ENCODE measurements at regions of chr1 and their contacts with region 1.

Region 1: GRCh38 chr1:24910751-24911650 is 19.1 kb downstream of the RUNX3 start:
- DNase-seq: no peak

Region 2: GRCh38 chr1:24355466-24355865 is 555.5 kb before region 1 on chr1:
- intact Hi-C with region 1: loop called in 1 of 2 experiments (anchors 5 kb)
- DNase-seq: no peak

Region 3: GRCh38 chr1:24861821-24862727 is 48.9 kb before region 1 on chr1:
- intact Hi-C with region 1: loop called in 1 of 2 experiments (anchors 2 kb)
- DNase-seq: peak; percentile 59

Region 4: DNA sequence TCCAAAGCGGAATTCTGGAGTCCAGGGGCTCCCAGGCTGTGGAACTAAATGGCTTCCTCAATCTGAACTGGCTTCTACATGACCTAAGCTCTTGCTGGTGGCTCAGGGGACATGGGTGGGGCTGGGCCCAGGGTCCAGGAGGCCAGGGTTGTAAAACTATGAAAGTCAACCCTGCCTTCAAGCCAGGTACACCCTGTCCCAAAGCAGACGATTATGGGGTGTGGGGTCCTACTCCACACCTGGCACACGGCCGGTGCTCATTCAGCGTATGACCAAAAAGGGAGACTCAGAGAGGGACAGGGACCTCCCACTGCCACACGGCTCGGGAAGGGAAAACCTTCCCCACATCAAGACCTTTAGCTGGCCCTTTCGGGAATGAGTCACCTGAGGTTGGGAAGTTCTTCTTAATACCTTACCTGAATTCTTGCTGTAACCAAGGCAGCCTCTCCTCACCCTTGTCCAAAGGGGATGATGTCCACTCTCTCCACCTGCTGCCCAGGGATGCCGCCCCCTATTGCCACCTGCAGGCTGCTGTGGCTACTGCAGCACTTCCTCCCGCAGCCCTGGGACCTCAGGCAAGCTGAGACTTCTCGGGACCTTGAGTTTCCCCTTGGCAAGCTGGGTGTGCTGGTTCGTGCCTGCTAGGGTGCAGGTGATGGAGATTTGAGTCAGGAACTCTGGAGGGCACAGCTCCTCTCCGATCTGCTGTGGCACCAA is 13.1 kb before region 1 on chr1:
- intact Hi-C with region 1: no loop called
- DNase-seq: peak; percentile 88

Region 5: GRCh38 chr1:24964811-24965570 is 54.0 kb after region 1 on chr1:
- intact Hi-C with region 1: no loop called
- DNase-seq: peak; percentile 80

Measured in posterior vena cava (tissue), 2 donors.